Gastrocnemius medialis (tissue), 4 donors: ENCODE measurements at regions of chr1 and their contacts with region 1.

Region 1: DNA sequence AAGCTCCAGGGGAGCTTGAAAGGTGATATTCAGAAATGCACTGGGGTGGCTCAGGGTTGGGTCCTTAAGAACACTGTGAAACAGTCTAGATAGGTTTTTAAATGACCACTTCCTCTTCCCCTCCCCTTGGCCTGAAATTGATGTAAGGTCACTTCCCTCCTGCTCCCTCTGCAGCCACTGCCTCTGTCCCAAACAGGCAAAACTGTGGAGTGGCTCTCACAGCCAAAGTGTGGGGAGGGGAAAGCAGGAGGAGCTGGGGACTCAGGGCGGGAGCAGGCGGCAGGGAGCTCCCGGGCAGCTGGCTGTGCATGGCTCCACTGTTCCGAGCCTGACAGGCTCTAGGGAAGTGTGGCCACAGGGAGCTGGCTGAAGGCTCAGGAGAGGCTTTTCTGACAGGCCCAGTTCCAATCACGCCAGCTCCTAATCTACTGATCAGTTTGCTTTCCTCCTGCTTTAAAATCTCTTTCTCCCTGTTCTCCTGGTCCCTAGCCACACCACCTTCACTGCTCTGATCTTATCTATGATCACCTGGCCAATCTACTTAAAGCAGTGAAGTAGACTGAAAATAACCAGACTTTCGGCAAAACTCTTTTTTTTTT is 5.1 kb upstream of the CSRP1 start:
- DNase-seq: peak in 1 of 2 donors; percentile 43
- ATAC-seq: peak; percentile 32 to 34
- H3K4me3 ChIP-seq: no peak overlapping the region
- H3K27ac ChIP-seq: peak overlapping the region; percentile 54 to 72 (median 68)
- H3K4me1 ChIP-seq: peaks cover 11 to 21% of the 10 kb centered on the region in 2 donors
- H3K27me3 ChIP-seq: no peaks in the 10 kb centered on the region
- CTCF ChIP-seq: no peak
- POLR2A ChIP-seq: no peak

Region 2: GRCh38 chr1:201481761-201482493 is 30.1 kb before region 1 on chr1:
- in situ Hi-C with region 1: loop called in 2 of 4 experiments (anchors 5 kb)
- intact Hi-C with region 1: loop called (anchors 1 kb)
- DNase-seq: peak; percentile 56 to 78
- ATAC-seq: peak; percentile 38 to 68
- H3K4me3 ChIP-seq: peak overlapping the region; percentile 6 to 49 (median 38)
- H3K27ac ChIP-seq: peak overlapping the region in 3 of 4 donors; percentile 73 to 84 (median 82)
- H3K4me1 ChIP-seq: peaks cover 17 to 18% of the 10 kb centered on the region in 2 donors
- H3K27me3 ChIP-seq: no peaks in the 10 kb centered on the region
- CTCF ChIP-seq: peak; percentile 76 to 95 (median 91)
- POLR2A ChIP-seq: no peak

Region 3: GRCh38 chr1:201570886-201571624 is 59.0 kb after region 1 on chr1:
- in situ Hi-C with region 1: no loop called
- intact Hi-C with region 1: no loop called
- DNase-seq: no peak
- ATAC-seq: no peak
- H3K4me3 ChIP-seq: no peak overlapping the region
- H3K27ac ChIP-seq: no peak overlapping the region
- H3K4me1 ChIP-seq: peaks cover 0 to 7% of the 10 kb centered on the region in 2 donors
- H3K27me3 ChIP-seq: no peaks in the 10 kb centered on the region
- CTCF ChIP-seq: no peak
- POLR2A ChIP-seq: no peak